ENCODE measurements at regions of chr3 and their contacts with region 1.

Region 1: DNA sequence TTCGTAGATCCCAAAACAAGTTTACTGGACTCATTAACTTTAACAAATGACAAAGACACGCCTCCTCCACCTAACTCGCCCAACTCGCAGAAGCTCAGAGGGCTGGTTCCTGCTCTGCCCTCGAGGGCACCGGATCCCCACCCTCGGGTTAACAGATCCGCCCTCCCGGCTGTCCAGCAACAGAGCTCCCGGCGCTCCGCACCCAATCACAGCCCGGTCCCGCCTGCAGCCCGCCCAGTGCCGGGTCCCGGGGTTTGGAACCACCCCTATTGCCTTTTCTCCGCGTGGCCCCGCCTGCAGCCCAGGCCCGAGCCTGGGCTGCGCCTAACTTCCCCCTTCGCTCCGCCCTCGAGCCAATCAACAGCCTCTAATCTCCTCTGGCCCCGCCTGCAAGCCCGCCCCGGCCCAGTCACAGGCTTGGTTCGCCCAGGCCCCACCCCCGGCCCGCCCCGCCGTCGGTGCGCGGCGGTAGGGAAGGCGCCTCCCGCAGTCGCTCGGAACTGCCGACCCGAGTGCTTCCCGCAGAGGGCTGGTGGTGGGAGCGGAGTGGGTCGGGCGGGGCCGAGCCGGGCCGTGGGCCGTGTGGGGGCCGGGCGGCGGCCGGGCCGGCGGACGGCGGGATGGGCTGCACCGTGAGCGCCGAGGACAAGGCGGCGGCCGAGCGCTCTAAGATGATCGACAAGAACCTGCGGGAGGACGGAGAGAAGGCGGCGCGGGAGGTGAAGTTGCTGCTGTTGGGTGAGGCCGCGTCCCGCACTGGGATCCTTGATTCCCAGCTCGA is at the start of gene GNAI2:
- DNase-seq: peak; percentile 98
- H3K4me3 Mint-ChIP-seq: peak within 1 kb of the TSS; percentile 86
- H3K27ac Mint-ChIP-seq: peak within 1 kb of the TSS; percentile 90
- H3K4me1 Mint-ChIP-seq: peaks cover 20% of the 10 kb centered on the region
- H3K27me3 Mint-ChIP-seq: no peaks in the 10 kb centered on the region
- CTCF ChIP-seq: no peak
- total RNA-seq, gene GNAI2: 92.5 and 102 TPM in 2 replicates

Region 2: DNA sequence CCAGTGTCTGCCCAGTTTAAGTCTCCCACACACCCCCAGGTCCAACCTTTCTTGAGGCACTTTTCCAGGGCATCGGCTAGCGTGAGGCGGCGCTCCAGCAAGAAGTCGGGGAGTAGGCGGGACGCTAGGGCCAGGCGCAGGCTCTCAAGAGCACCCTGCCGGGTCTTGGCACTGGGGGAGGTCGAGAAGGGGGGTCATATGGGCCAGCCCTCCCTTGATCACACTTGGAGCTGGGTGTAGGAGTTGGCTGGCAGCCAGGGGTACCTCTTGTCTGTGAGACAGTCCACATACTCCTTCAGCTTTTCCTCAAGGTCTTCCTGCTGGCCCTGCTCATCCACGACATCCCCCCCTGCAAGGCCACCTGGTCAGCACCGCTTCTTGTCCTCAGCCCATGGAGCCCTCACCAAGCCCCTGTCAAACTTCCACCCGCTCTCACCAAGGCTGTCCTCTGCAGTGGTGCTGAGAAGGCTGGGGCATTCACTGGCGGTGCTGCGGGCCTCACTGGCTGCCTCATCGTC is 54.3 kb after region 1 on chr3:
- CTCF ChIA-PET with region 1: no interaction called
- intact Hi-C with region 1: loop called (anchors 2 kb)
- DNase-seq: no peak
- H3K4me3 Mint-ChIP-seq: peak overlapping the region; percentile 73
- H3K27ac Mint-ChIP-seq: no peak overlapping the region
- H3K4me1 Mint-ChIP-seq: peaks cover 19% of the 10 kb centered on the region
- H3K27me3 Mint-ChIP-seq: no peaks in the 10 kb centered on the region
- CTCF ChIP-seq: no peak

Measured in Calu3 (cell line).